ENCODE measurements at regions of chr5 and their contacts with region 1.

Region 1: DNA sequence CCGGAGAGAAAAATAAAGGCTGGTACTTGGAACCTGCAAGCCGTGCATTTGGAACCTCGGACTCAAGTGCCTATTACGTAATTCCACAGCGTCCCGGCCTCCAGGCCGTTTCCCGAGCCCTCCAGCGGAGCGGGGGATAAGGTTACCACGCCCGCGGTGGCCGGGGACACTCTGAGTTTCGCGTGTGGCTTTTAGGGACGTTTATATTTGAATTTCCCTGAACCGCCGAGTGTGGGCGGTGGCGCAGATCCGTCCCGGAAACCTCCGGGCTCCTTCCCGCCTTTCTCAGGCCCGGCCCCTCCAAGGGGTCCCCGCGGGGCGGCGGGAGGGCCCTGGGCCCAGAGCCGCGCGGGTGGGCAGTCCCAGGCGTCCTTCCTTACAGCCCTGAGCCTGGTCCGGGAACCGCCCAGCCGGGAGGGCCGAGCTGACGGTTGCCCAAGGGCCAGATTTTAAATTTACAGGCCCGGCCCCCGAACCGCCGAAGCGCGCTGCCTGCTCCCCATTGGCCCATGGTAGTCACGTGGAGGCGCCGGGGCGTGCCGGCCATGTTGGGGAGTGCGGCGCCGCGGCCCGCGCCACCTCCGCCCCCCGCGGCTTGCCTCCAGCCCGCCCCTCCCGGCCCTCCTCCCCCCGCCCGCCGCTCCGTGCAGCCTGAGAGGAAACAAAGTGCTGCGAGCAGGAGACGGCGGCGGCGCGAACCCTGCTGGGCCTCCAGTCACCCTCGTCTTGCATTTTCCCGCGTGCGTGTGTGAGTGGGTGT is at the start of gene LMNB1:
- DNase-seq: peak; percentile 96
- H3K4me3 Mint-ChIP-seq: peak within 1 kb of the TSS; percentile 95
- H3K27ac Mint-ChIP-seq: peak within 1 kb of the TSS; percentile 94
- H3K4me1 Mint-ChIP-seq: peaks cover 30% of the 10 kb centered on the region
- H3K27me3 Mint-ChIP-seq: no peaks in the 10 kb centered on the region
- total RNA-seq, gene LMNB1: 291 to 296 TPM

Region 2: GRCh38 chr5:126422989-126423788 is 353.5 kb before region 1 on chr5 and contains the start of gene GRAMD2B:
- CTCF ChIA-PET with region 1: no interaction called
- POLR2A ChIA-PET with region 1: interaction called, 12 read pairs
- DNase-seq: peak; percentile 74
- H3K4me3 Mint-ChIP-seq: peak within 1 kb of the TSS; percentile 85
- H3K27ac Mint-ChIP-seq: peak within 1 kb of the TSS; percentile 77
- H3K4me1 Mint-ChIP-seq: peaks cover 38% of the 10 kb centered on the region
- H3K27me3 Mint-ChIP-seq: no peaks in the 10 kb centered on the region
- total RNA-seq, gene GRAMD2B: 4.6 to 5.0 TPM

Region 3: DNA sequence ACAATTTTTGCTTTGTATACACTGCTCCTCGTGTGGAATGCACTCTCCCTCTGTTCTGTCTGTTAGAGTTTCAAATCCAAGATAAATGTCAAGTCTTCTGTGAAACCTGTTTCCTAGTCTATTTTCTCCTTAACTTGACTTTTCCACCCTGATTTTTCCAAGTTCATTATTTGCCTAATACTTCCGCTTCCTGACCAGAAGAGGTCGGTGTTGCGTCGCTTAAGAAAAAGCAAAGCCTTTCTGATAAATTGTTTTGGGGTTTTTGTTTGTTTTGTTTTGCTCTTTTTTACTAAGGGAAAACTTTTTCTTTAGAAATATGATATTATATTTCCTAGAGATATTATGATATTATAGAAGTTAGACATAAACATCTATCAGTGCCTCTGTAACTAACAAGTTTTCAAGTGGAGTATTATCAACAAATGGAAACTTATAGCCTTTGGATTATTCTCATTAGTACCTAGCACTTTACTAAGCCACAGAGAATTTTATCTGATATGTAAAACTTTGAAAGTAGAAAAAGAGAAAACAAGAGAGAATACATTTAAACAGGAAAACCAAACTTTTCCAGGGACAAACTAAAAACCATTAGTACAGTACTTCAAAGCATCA is 120.2 kb before region 1 on chr5:
- CTCF ChIA-PET with region 1: interaction called, 19 read pairs
- POLR2A ChIA-PET with region 1: interaction called, 14 read pairs
- DNase-seq: peak; percentile 24
- H3K4me3 Mint-ChIP-seq: no peak overlapping the region
- H3K27ac Mint-ChIP-seq: no peak overlapping the region
- H3K4me1 Mint-ChIP-seq: peaks cover 6% of the 10 kb centered on the region
- H3K27me3 Mint-ChIP-seq: peaks cover 5% of the 10 kb centered on the region

Region 4: GRCh38 chr5:126718246-126718868 is 58.3 kb before region 1 on chr5:
- CTCF ChIA-PET with region 1: no interaction called
- POLR2A ChIA-PET with region 1: interaction called, 26 read pairs
- DNase-seq: no peak
- H3K4me3 Mint-ChIP-seq: no peak overlapping the region
- H3K27ac Mint-ChIP-seq: no peak overlapping the region
- H3K4me1 Mint-ChIP-seq: peaks cover 8% of the 10 kb centered on the region
- H3K27me3 Mint-ChIP-seq: no peaks in the 10 kb centered on the region

Region 5: GRCh38 chr5:126745259-126745992 is 31.3 kb before region 1 on chr5:
- CTCF ChIA-PET with region 1: interaction called, 18 read pairs
- POLR2A ChIA-PET with region 1: interaction called, 377 read pairs
- DNase-seq: no peak
- H3K4me3 Mint-ChIP-seq: no peak overlapping the region
- H3K27ac Mint-ChIP-seq: no peak overlapping the region
- H3K4me1 Mint-ChIP-seq: peaks cover 30% of the 10 kb centered on the region
- H3K27me3 Mint-ChIP-seq: peaks cover 2% of the 10 kb centered on the region

Region 6: DNA sequence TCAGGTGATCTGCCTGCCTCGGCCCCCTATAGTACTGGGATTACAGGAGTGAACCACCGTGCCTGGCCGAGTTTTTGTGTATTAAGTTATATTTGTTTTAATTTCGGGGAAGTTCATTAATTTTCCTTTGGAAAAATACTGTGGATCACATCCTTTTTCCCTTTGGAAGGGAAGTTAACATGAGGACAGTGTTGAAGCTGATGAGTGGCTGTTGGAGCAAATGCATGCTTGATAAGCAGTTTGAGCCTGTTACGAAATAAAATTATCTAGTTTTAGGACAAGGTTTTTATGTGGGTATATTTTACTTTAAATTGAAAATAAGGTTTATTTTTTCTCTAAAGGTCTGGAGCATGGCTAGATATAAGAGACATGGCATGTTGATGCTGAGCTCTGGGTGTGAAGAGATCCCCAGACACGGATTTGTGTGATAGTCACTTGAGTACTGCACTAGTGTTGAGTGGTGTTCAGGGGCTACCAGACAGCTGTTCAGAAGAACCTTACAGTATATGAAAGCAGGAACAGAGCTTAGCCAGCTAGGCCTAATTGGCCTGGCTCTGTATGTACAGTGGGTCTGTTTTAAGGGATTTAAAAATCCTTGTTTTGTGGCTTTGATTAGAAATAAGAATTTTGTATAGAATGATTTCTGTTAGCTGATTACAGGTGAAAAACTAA is 17.6 kb after region 1 on chr5:
- CTCF ChIA-PET with region 1: interaction called, 8 read pairs
- POLR2A ChIA-PET with region 1: interaction called, 21 read pairs
- DNase-seq: no peak
- H3K4me3 Mint-ChIP-seq: no peak overlapping the region
- H3K27ac Mint-ChIP-seq: no peak overlapping the region
- H3K4me1 Mint-ChIP-seq: peaks cover 58% of the 10 kb centered on the region
- H3K27me3 Mint-ChIP-seq: no peaks in the 10 kb centered on the region

Region 7: DNA sequence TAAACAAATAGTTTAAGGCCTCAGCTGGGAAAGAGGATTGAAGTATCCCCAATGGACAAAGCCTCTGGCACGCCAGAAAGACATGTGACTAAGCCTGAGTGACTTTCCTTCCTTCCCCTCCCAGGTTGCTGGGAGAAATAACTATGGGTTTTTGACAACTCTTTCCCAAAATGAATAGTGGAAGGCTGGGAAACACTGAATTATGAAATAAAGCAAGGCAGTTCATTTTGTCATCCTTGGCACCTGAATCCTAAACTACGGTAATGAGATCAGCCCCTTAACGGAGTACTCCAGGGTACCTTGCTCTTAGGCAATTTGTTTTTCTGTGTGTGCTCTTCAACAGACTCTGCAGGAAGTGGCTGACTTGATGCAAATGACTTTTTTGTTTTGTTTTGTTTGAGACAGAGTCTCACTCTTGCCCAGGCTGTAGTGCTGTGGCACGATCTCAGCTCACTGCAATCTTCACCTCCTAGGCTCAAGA is 75.5 kb after region 1 on chr5:
- CTCF ChIA-PET with region 1: interaction called, 5 read pairs
- POLR2A ChIA-PET with region 1: interaction called, 24 read pairs
- DNase-seq: no peak
- H3K4me3 Mint-ChIP-seq: no peak overlapping the region
- H3K27ac Mint-ChIP-seq: peak overlapping the region; percentile 91
- H3K4me1 Mint-ChIP-seq: peaks cover 48% of the 10 kb centered on the region
- H3K27me3 Mint-ChIP-seq: no peaks in the 10 kb centered on the region

Measured in activated CD4-positive, alpha-beta memory T cell treated with anti-CD3 and anti-CD28 coated beads, Interleukin-2, amount 10 ng/mL, durations not matched to agents 7 days and 5 days (primary cell).